ENCODE measurements at regions of chr6 and their contacts with region 1.

Region 1: DNA sequence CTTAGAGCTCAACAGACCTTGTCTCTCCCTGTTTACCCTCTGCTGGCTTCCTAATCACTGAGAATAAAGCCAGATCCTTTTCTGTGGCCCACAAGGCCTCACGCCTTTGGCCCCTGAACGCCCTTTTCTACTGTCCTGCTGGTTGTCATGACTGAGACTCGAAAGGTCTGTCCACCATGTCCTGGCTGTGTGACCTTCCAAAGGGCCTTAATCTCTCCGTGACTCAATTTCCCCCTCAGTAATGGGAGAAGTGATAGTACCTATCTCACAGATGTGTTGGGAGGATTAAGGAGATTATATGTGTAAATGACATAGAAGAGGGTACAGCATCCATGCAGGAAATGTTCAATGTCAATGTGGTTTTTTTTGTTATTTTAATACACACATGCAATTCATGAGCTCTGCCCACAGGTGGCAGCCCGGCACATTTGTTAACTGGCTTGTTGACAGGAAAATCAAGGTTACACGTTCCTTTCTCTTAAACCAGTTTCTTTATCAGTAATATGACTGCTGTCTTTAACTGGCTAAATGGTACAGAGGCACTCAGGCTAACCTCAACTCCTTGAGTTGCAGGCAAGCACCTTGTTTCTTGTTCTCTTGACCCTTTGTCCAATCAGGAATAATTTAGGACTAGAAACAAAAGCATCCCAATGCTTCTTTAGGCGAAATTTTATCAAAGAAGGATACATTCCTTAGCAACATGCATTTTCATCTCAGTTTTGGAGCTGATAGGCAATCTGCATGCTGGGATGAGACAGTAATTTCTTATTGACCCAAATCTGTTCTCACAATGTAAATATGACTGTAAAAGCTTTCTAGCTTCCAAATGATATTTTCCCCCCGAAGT is 16.6 kb downstream of the SLC22A1 start:
- DNase-seq: peak in 1 of 2 experiments; percentile 65
- H3K4me3 ChIP-seq: no peak overlapping the region
- H3K4me3 Mint-ChIP-seq: no peak overlapping the region
- H3K27ac Mint-ChIP-seq: no peak overlapping the region
- H3K4me1 ChIP-seq: peaks cover 17% of the 10 kb centered on the region
- H3K4me1 Mint-ChIP-seq: peaks cover 32% of the 10 kb centered on the region
- H3K27me3 ChIP-seq: no peaks in the 10 kb centered on the region
- H3K27me3 Mint-ChIP-seq: no peaks in the 10 kb centered on the region
- CTCF ChIP-seq: peak; percentile 75 to 80

Region 2: DNA sequence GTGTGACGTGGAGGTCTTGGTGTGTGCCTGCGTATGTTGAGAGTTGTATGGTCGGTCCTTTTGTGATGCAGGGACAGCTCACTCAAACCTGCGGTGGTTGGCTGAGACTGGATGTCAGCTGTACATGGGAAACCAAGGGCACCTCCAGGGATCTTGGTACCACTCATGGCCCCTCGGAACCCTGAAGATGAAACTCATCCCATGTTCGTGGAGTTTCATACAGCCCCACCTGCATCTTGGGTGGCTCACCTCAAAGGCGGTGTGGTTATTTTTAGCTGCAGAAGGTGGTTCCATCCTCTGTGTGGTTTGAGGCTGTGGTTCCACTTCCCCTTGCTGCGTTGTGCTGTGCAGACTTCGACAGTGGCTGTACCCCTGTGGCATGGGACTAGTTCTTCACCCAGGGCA is 69.2 kb before region 1 on chr6:
- CTCF ChIA-PET with region 1: no interaction called
- POLR2A ChIA-PET with region 1: no interaction called
- intact Hi-C with region 1: no loop called
- DNase-seq: no peak
- H3K4me3 ChIP-seq: no peak overlapping the region
- H3K4me3 Mint-ChIP-seq: no peak overlapping the region
- H3K27ac Mint-ChIP-seq: peak overlapping the region; percentile 20
- H3K4me1 ChIP-seq: no peaks in the 10 kb centered on the region
- H3K4me1 Mint-ChIP-seq: no peaks in the 10 kb centered on the region
- H3K27me3 ChIP-seq: no peaks in the 10 kb centered on the region
- H3K27me3 Mint-ChIP-seq: no peaks in the 10 kb centered on the region
- CTCF ChIP-seq: no peak

Region 3: DNA sequence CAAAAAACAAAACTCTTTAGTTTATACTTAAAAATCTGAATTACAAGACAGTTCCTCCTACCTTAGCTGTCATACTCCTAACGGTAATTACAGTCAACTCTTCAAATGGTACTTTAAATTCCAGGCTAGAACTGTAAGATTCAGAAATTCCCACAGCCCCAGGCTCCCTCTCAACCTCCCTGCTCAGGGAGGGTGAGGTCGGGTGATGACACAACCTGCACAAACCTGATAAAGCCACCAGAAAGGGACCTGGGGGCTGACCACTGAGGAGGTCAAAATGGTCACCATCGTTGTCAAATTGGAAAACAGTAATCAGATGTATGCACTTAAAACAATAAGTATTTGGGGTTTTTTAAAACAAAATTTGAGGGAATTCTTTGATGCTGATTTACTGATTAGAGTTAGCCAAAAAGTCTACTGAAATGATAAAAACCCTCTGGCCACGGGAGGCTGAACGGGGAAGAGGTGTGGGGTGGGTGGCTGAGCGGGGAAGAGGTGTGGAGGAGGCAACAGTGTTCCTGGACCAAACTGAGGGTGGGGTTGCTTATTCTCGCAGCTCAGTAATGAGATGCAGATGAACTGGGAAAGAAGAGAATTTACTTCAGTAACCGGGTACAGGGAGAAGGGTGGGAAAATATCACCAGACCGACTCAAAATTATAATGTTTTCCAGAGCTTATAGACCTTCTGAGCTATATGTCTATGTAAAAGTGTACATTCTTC is 35.8 kb after region 1 on chr6:
- CTCF ChIA-PET with region 1: no interaction called
- POLR2A ChIA-PET with region 1: interaction called, 3 read pairs
- intact Hi-C with region 1: loop called (anchors 1 kb)
- DNase-seq: peak; percentile 51 to 53
- H3K4me3 ChIP-seq: no peak overlapping the region
- H3K4me3 Mint-ChIP-seq: peak overlapping the region; percentile 59
- H3K27ac Mint-ChIP-seq: peak overlapping the region; percentile 63
- H3K4me1 ChIP-seq: peaks cover 30% of the 10 kb centered on the region
- H3K4me1 Mint-ChIP-seq: peaks cover 14% of the 10 kb centered on the region
- H3K27me3 ChIP-seq: no peaks in the 10 kb centered on the region
- H3K27me3 Mint-ChIP-seq: no peaks in the 10 kb centered on the region
- CTCF ChIP-seq: no peak

Region 4: DNA sequence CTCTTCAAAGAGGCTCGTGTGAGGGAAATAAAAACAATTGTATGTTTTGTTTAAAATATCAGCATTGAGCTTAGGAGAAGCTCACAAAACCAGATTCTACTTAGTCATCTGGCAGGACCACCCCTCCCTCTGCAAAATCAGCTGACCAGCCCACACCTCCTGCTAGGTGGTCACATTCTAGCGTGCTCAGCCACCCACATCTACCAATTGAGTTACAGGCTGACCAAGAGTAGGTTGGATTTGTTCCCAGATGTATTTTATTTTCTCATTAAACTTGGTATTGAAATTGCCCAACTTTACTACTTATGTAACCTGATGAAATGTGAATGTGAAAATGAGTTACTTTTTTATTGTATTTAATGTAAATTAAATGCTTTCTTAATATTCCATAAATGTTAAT is 64.2 kb after region 1 on chr6:
- CTCF ChIA-PET with region 1: no interaction called
- POLR2A ChIA-PET with region 1: no interaction called
- intact Hi-C with region 1: no loop called
- DNase-seq: no peak
- H3K4me3 ChIP-seq: no peak overlapping the region
- H3K4me3 Mint-ChIP-seq: no peak overlapping the region
- H3K27ac Mint-ChIP-seq: no peak overlapping the region
- H3K4me1 ChIP-seq: peaks cover 8% of the 10 kb centered on the region
- H3K4me1 Mint-ChIP-seq: peaks cover 26% of the 10 kb centered on the region
- H3K27me3 ChIP-seq: no peaks in the 10 kb centered on the region
- H3K27me3 Mint-ChIP-seq: no peaks in the 10 kb centered on the region
- CTCF ChIP-seq: no peak

Region 5: DNA sequence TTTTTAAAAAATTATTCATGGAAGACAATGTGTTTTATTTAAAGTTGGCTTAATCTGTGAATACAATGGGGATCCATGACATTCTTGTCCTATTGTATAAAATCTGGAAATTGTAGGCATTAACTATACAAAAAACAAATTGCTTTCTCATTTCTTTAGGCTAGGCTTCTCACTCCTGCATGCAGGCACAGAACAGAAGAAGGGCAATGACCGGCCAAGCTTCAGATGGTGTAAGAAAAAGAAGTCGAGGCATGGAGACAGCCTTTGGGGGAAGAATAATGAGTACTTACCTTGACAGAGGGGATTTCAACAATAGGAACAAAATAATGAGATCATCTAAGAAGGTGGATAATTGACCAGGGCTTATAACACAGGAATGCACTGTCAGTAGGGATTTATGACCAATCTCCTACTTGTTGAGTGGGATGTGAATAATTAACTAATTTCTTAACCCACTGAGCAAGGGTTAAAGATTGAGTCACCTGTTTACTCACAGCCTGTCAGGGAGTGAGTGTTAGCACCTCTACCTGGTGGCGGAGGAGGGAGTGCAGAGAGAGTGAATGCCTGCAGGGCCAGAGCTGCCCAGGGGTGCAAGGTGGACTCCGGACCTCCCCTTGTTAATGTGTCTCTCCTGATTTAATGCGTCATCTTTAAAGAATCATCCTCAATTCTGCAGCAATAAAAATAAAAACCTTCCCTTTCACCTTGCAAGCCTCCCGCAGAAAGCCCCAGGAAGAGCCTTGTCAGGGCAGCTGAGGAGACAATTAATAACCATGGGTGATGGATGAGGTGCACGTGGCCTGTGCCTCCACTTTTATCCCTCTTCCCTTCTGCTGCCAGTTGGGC is 116.5 kb after region 1 on chr6:
- CTCF ChIA-PET with region 1: no interaction called
- POLR2A ChIA-PET with region 1: no interaction called
- intact Hi-C with region 1: loop called (anchors 1 kb)
- DNase-seq: peak; percentile 81 to 90
- H3K4me3 ChIP-seq: peak overlapping the region; percentile 13; the same call in 1 of the 2 replicates
- H3K4me3 Mint-ChIP-seq: peak overlapping the region; percentile 52
- H3K27ac Mint-ChIP-seq: peak overlapping the region; percentile 32
- H3K4me1 ChIP-seq: peaks cover 25% of the 10 kb centered on the region
- H3K4me1 Mint-ChIP-seq: peaks cover 17% of the 10 kb centered on the region
- H3K27me3 ChIP-seq: no peaks in the 10 kb centered on the region
- H3K27me3 Mint-ChIP-seq: no peaks in the 10 kb centered on the region
- CTCF ChIP-seq: peak; percentile 22 to 54

Region 6: DNA sequence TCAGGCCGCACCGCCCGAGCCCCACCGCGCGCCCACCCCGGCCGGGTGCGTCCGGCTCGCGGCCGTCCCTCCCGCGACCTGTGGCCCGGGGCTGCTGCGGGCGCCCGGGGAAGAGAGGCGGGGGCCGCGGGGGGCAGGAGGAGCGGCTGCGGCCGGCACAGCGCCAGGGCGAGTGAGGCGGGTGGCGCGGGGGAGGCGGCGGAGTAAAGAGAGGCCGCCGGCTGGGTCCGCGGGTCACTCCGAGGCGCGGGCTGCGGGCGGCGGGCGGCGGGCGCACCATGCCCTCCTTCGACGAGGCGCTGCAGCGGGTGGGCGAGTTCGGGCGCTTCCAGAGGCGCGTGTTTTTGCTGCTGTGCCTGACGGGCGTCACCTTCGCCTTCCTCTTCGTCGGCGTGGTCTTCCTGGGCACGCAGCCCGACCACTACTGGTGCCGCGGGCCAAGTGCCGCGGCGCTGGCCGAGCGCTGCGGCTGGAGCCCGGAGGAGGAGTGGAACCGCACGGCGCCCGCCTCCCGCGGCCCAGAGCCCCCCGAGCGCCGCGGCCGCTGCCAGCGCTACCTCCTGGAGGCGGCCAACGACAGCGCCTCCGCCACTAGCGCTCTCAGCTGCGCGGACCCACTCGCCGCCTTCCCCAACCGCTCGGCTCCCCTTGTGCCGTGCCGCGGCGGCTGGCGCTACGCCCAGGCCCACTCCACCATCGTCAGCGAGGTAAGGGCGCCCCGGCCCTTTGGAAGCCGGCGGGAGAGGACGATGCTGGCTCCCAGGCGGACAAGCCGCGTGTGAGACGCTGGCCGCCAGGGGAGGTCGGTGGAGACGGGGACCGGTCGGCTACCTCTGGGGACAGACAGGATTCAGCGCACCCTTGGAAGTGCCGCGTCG is 210.2 kb after region 1 on chr6 and contains the start of gene SLC22A3:
- CTCF ChIA-PET with region 1: no interaction called
- POLR2A ChIA-PET with region 1: no interaction called
- intact Hi-C with region 1: loop called (anchors 5 kb)
- DNase-seq: peak; percentile 52 to 70
- H3K4me3 ChIP-seq: peak within 1 kb of the TSS; percentile 57
- H3K4me3 Mint-ChIP-seq: peak within 1 kb of the TSS; percentile 88
- H3K27ac Mint-ChIP-seq: no peak within 1 kb of the TSS
- H3K4me1 ChIP-seq: peaks cover 4% of the 10 kb centered on the region; the same call in 1 of the 2 replicates
- H3K4me1 Mint-ChIP-seq: peaks cover 14% of the 10 kb centered on the region
- H3K27me3 ChIP-seq: no peaks in the 10 kb centered on the region
- H3K27me3 Mint-ChIP-seq: peaks cover 10% of the 10 kb centered on the region
- CTCF ChIP-seq: peak; percentile 18 to 43
- total RNA-seq, gene SLC22A3: 2.3 and 2.4 TPM in 2 replicates

Region 7: DNA sequence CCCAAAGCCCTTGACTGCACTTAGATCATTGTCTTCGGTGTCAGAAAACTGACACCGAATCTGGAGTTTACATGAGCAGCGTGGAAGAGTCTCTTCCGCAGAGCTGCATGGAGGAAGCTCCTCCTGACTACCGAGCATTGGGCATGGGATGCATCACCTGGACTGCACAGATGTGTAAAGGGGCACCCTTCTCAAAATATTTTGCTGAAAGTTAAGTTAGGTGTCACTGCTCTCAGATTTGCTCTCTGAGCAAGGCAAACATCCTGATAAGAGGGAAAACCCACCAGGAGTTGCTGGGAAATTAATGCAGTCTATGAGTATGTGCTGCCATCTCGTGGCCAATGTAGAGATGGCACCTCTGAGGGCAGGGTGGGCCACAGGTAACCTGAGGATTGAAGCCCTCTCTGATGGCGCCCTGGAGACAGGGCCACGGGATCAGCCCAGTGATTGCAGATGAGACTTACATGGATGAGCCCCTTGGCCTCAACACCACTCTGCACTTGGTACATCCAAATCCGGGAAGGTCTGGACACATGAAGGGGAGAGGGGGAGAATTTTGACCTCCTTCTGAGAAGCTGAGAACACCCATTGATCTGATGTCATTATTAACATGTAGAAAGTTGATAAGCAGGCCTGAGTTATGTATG is 396.0 kb after region 1 on chr6:
- CTCF ChIA-PET with region 1: no interaction called
- POLR2A ChIA-PET with region 1: no interaction called
- intact Hi-C with region 1: loop called (anchors 2 kb)
- DNase-seq: peak; percentile 35 to 67
- H3K4me3 ChIP-seq: no peak overlapping the region
- H3K4me3 Mint-ChIP-seq: no peak overlapping the region
- H3K27ac Mint-ChIP-seq: no peak overlapping the region
- H3K4me1 ChIP-seq: no peaks in the 10 kb centered on the region
- H3K4me1 Mint-ChIP-seq: no peaks in the 10 kb centered on the region
- H3K27me3 ChIP-seq: no peaks in the 10 kb centered on the region
- H3K27me3 Mint-ChIP-seq: no peaks in the 10 kb centered on the region
- CTCF ChIP-seq: peak; percentile 88 to 89

Measured in Caco-2 (cell line).